CD8-positive, alpha-beta memory T cell (primary cell): ENCODE measurements at regions of chr5 and their contacts with region 1.

Region 1: GRCh38 chr5:142095651-142096330 is 12.8 kb upstream of the NDFIP1 start:
- DNase-seq: peak; percentile 55 to 94 (median 85)
- H3K4me3 ChIP-seq: peak overlapping the region; percentile 50
- H3K4me3 Mint-ChIP-seq: peak overlapping the region in 6 of 7 donors; percentile 33 to 67 (median 60)
- H3K27ac ChIP-seq: peak overlapping the region; percentile 47
- H3K27ac Mint-ChIP-seq: peak overlapping the region; percentile 81 to 96 (median 93)
- H3K4me1 ChIP-seq: peaks cover 52% of the 10 kb centered on the region
- H3K4me1 Mint-ChIP-seq: peaks cover 31 to 49% (median 37%) of the 10 kb centered on the region in 3 donors
- H3K27me3 ChIP-seq: no peaks in the 10 kb centered on the region
- H3K27me3 Mint-ChIP-seq: no peaks in the 10 kb centered on the region

Region 2: DNA sequence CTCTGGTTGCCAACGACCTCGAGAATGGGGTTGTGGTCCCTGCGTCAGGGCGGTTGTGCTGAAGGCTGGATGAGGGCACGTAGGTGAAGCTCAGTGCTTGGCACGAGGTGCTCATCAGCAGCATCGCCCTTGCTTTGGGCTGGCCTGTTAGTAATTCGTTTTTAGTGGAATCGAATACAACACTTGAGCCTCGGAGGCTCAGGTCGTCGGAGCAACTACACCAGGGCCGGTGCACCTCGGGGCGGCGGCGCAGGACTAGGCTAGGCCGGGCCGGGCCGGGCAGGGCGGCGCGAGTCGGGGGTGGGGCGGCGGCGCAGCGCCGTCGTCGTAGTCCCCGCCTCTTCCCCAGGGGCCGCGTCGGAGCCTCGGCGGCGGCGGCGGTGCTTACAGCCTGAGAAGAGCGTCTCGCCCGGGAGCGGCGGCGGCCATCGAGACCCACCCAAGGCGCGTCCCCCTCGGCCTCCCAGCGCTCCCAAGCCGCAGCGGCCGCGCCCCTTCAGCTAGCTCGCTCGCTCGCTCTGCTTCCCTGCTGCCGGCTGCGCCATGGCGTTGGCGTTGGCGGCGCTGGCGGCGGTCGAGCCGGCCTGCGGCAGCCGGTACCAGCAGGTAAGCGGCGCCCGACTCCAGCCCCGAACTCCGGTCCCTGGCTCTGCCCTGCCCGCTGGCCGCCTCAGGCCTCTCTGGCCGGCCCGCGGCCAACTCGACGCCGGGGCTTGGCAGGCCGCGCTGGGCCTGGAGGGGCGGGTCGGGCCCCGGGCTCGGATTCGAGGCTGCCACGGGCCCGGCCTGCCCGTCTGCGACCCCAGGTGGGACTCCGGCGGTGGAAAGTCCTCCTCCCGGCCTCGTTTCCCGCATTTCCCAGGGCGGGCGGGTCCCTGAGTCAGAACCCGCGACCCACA is 12.9 kb after region 1 on chr5 and contains the start of gene NDFIP1:
- CTCF ChIA-PET with region 1: interaction called, 5 read pairs
- POLR2A ChIA-PET with region 1: interaction called, 21 read pairs
- DNase-seq: peak; percentile 77 to 91 (median 86)
- H3K4me3 ChIP-seq: peak within 1 kb of the TSS; percentile 89
- H3K4me3 Mint-ChIP-seq: peak within 1 kb of the TSS; percentile 91 to 99 (median 94)
- H3K27ac ChIP-seq: peak within 1 kb of the TSS; percentile 88
- H3K27ac Mint-ChIP-seq: peak within 1 kb of the TSS; percentile 91 to 99 (median 98)
- H3K4me1 ChIP-seq: peaks cover 79% of the 10 kb centered on the region
- H3K4me1 Mint-ChIP-seq: peaks cover 62 to 71% (median 71%) of the 10 kb centered on the region in 3 donors
- H3K27me3 ChIP-seq: no peaks in the 10 kb centered on the region
- H3K27me3 Mint-ChIP-seq: no peaks in the 10 kb centered on the region
- total RNA-seq, gene NDFIP1: 81.3 to 84.4 TPM